ENCODE measurements at regions of chr2 and their contacts with region 1.

Region 1: GRCh38 chr2:162301151-162301804 is 17.2 kb downstream of the IFIH1 start:
- DNase-seq: peak; percentile 27
- H3K4me3 Mint-ChIP-seq: no peak overlapping the region
- H3K27ac Mint-ChIP-seq: no peak overlapping the region
- H3K4me1 Mint-ChIP-seq: peaks cover 1% of the 10 kb centered on the region
- H3K27me3 Mint-ChIP-seq: no peaks in the 10 kb centered on the region

Region 2: DNA sequence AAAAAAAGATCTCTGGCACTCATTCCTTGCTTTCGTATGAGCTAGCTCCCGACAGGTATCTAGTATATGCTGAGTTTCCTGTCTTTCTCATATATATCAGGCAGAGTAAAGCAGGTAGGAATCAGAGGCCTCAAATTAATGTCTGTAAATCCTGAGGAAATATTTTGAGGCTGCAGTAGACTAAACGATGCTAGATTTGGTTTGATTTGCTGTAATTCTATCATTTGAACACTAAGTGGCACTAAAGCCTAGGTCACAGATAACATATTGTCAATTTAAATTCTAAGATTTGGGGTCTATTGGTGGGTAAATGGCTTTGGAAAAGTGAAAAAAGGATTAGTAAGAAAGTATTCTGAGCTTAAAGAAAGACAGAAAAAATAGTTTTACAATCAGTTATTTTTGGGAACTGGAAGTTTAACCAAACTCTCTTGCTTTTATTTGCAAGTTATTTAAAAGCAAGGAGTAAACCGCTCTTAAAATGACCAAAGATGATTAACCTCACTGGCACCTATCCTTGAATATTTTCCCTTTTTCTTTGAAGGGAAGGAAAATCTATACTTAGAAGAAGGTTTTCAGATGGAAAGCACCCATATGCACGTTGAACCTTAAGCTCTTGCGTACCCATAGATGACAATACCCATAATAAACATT is 714.6 kb before region 1 on chr2:
- intact Hi-C with region 1: loop called (anchors 2 kb)
- DNase-seq: no peak
- H3K4me3 Mint-ChIP-seq: no peak overlapping the region
- H3K27ac Mint-ChIP-seq: no peak overlapping the region
- H3K4me1 Mint-ChIP-seq: no peaks in the 10 kb centered on the region
- H3K27me3 Mint-ChIP-seq: peaks cover 23% of the 10 kb centered on the region

Region 3: DNA sequence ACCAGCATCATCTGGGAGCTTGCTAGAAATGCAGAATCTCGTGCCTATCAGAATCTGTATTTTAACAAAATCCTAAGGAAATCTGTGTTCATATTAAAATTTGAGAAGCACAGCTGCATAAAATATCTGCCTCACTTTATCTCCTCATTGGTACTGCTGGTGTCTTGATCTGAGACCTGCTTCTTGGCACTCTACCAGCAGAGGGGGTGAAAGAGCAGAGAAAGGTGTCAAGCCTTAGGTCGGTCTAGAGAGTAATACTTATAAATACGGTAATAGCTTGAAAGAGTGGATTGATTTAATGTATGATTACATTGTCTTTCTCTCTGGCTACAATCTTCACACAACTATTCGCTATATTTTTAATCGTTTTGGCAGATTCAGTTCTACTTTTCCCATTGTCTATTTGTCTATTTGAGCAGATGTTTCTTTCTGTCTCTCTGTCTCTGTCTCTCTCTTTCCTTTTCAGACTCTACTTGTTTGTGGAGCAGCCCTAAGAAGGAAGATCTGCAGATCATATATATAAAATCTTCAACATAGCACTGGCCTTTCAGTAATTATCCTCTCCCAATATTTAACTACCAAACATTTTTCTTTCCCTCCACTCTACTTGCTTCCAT is 147.6 kb before region 1 on chr2:
- intact Hi-C with region 1: loop called (anchors 1 kb)
- DNase-seq: peak; percentile 35
- H3K4me3 Mint-ChIP-seq: no peak overlapping the region
- H3K27ac Mint-ChIP-seq: no peak overlapping the region
- H3K4me1 Mint-ChIP-seq: peaks cover 5% of the 10 kb centered on the region
- H3K27me3 Mint-ChIP-seq: peaks cover 49% of the 10 kb centered on the region

Region 4: DNA sequence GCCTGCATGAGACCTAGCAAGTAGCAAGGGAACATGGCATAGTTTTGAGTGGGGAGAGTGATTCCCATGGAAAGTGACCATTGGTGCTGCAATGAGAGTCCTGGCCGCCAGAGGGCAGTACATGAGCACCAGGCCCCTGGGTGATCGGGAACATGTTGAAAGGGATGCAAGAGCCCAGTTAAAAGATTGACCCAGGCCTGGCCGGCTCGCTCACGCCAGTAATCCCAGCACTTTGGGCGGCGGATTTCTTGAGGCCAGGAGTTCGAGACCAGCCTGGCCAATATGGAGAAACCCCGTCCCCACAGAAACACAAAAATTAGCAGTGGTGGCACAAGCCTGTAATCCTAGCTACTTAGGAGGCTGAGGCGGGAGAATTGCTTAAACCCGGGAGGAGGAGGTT is 80.2 kb before region 1 on chr2:
- intact Hi-C with region 1: loop called (anchors 1 kb)
- DNase-seq: peak; percentile 50
- H3K4me3 Mint-ChIP-seq: no peak overlapping the region
- H3K27ac Mint-ChIP-seq: no peak overlapping the region
- H3K4me1 Mint-ChIP-seq: no peaks in the 10 kb centered on the region
- H3K27me3 Mint-ChIP-seq: peaks cover 31% of the 10 kb centered on the region

Region 5: DNA sequence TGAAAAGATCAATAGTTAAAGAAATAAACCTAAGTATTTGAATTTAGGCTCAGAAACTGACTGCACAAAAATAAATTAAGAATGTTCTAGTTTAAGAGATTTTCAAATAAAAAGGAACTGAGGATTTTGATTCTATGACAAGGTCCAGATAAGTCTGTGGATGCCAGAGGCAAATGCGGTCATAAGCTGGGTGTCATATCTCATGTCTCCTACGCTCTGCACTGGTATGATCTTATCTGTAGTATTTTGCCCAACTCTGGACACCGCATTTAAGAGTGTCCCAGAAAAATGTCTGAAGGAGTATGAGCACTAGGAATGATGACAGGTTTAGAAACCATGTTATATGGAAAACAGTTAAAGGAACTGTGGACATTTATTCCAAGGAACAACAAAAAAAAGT is 15.5 kb before region 1 on chr2:
- intact Hi-C with region 1: no loop called
- DNase-seq: no peak
- H3K4me3 Mint-ChIP-seq: no peak overlapping the region
- H3K27ac Mint-ChIP-seq: no peak overlapping the region
- H3K4me1 Mint-ChIP-seq: no peaks in the 10 kb centered on the region
- H3K27me3 Mint-ChIP-seq: no peaks in the 10 kb centered on the region

Region 6: DNA sequence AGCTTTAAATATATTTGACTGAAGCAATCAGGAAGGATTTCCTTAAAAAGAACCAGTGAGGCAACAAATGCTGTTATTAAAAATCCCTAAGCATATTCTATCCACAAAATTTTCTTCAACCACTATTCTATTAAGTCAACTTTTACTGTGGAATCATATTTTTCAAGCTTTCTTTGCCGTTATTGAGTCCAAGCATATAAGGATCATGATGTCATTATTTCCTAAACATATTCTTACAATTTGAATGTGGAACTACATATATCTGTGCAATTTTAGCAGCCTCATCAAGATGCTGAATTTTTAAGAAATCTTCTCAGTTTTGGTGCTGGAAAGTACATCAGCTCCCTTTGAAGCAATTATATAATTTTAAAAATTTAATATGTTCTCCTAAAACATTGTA is 11.6 kb after region 1 on chr2:
- intact Hi-C with region 1: loop called (anchors 1 kb)
- DNase-seq: no peak
- H3K4me3 Mint-ChIP-seq: no peak overlapping the region
- H3K27ac Mint-ChIP-seq: no peak overlapping the region
- H3K4me1 Mint-ChIP-seq: peaks cover 60% of the 10 kb centered on the region
- H3K27me3 Mint-ChIP-seq: no peaks in the 10 kb centered on the region

Region 7: GRCh38 chr2:162370931-162371330 is 69.7 kb after region 1 on chr2:
- intact Hi-C with region 1: no loop called
- DNase-seq: no peak
- H3K4me3 Mint-ChIP-seq: no peak overlapping the region
- H3K27ac Mint-ChIP-seq: no peak overlapping the region
- H3K4me1 Mint-ChIP-seq: no peaks in the 10 kb centered on the region
- H3K27me3 Mint-ChIP-seq: no peaks in the 10 kb centered on the region

Region 8: DNA sequence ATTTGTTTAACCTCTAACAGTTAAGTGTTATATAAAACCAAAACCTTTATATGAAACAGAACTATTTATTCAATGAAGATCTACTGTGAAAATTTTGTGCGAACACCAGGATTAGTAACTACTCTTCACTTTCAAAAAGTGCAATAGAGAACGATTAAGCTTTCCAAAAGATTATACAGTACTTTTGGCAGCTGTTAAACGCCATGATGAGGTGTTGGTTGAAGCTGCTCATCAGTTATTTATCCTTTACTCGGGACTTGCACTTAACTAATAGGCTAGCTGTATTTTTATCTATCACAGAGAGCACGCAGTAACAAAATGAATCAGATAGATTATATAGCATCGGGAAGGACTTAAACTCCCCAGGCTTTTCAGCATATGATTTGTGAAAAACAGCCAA is 156.2 kb after region 1 on chr2:
- intact Hi-C with region 1: no loop called
- DNase-seq: no peak
- H3K4me3 Mint-ChIP-seq: no peak overlapping the region
- H3K27ac Mint-ChIP-seq: no peak overlapping the region
- H3K4me1 Mint-ChIP-seq: no peaks in the 10 kb centered on the region
- H3K27me3 Mint-ChIP-seq: peaks cover 2% of the 10 kb centered on the region

Region 9: GRCh38 chr2:162579169-162579568 is 277.9 kb after region 1 on chr2:
- intact Hi-C with region 1: no loop called
- DNase-seq: no peak
- H3K4me3 Mint-ChIP-seq: no peak overlapping the region
- H3K27ac Mint-ChIP-seq: no peak overlapping the region
- H3K4me1 Mint-ChIP-seq: no peaks in the 10 kb centered on the region
- H3K27me3 Mint-ChIP-seq: no peaks in the 10 kb centered on the region

Measured in activated T-helper 2 cell treated with anti-CD3 and anti-CD28 coated beads, Interferon-gamma antibody, Interleukin-2, Interleukin-4, amounts not matched to agents 10 μg/mL and 5 μg/mL and 100 μg/mL, durations not matched to agents 14 hours and 24 hours and 36 hours (primary cell).